Activated CD8-positive, alpha-beta T cell treated with anti-CD3 and anti-CD28 coated beads for 36 hours (primary cell): ENCODE measurements at regions of chr19 and their contacts with region 1.

Region 1: GRCh38 chr19:8580710-8581281 is 3.6 kb upstream of the MYO1F start:
- DNase-seq: peak; percentile 91
- ATAC-seq: peak; percentile 69
- H3K4me3 Mint-ChIP-seq: no peak overlapping the region
- H3K27ac Mint-ChIP-seq: no peak overlapping the region
- H3K4me1 Mint-ChIP-seq: peaks cover 20% of the 10 kb centered on the region
- H3K27me3 Mint-ChIP-seq: peaks cover 2% of the 10 kb centered on the region
- CTCF ChIP-seq: peak; percentile 100

Region 2: DNA sequence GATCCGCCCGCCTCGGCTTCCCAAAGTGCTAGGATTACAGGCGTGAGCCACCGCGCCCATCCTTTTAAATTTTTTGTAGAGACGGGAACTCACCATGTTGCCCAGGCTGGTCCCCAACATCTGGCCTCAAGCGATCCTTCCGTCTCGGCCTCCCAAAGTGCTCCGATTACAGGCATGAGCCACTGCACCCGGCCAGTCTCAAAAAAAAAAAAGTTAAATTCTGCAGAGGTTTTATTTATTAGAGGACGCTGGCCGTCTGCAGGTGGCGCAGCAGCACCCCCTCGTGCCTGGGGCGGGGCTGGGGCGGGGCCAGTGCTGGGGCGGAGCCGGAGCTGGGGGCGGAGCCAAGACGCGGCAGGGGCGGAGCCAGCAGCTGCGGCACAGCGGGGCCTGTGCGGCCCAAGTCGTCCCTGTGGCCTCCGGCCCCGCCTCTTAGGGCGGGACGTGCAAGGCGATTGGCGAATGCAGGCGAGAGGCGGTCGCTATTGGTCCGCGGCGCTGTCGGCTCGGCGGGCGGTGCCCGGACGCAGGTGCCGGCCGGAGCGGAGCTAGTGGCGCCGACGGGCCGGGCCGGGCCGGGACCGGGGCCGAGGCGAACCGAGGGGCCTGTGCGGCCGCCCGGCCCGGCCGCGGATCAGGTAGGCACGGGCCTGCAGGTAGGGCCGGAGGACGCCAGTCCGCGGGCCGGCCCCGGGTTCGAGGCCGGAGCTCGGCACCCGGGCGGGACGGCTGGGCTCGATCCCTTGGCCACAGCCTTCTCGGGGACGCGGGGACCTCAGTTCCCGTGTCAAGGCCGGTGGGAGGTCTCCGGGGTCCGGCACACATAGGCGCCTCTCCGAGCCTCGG is 167.8 kb before region 1 on chr19 and contains the start of gene MARCHF2:
- CTCF ChIA-PET with region 1: interaction called, 43 read pairs
- POLR2A ChIA-PET with region 1: no interaction called
- intact Hi-C with region 1: no loop called
- DNase-seq: peak; percentile 96
- ATAC-seq: peak; percentile 100
- H3K4me3 Mint-ChIP-seq: peak within 1 kb of the TSS; percentile 60
- H3K27ac Mint-ChIP-seq: no peak within 1 kb of the TSS
- H3K4me1 Mint-ChIP-seq: peaks cover 7% of the 10 kb centered on the region
- H3K27me3 Mint-ChIP-seq: no peaks in the 10 kb centered on the region
- CTCF ChIP-seq: peak; percentile 59
- total RNA-seq, gene MARCHF2: 8.0 to 8.6 TPM

Region 3: DNA sequence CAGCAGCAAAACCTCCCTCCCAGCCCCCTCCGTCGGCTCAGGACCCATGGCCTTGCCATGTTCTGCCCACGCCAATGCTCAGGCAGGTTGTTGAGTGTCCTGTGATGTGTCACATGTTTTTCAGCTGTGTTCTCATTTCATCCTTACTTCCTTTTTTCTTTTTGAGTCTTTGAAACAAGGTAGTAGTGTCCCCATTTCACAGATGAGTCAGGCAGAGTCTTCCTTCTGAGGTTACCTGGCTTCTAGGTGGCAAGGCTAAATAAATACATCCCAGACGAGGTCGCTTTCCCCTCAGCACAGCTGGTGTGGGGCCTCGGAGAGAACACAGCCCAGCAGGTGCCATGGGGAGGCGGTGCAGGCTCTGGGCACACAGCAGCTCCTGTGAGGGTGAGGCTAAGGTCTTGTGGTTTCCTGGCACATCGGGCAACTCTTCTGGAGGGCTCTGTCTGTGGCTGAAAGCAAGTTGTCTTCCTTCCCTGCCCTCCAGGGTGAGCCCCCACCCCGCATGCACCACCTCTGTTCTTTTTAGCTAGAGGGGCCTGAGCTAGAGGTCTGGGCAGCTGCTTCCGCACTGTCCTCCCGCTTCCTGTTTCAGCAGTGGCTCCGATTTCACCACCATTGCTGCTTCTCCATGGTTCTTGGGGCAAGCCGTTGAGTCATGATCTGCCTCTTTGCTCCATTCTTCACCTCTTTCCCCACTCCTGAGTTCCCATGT is 93.5 kb before region 1 on chr19:
- CTCF ChIA-PET with region 1: interaction called, 39 read pairs
- POLR2A ChIA-PET with region 1: interaction called, 5 read pairs
- intact Hi-C with region 1: no loop called
- DNase-seq: peak; percentile 81
- ATAC-seq: peak; percentile 83
- H3K4me3 Mint-ChIP-seq: peak overlapping the region; percentile 12
- H3K27ac Mint-ChIP-seq: peak overlapping the region; percentile 93
- H3K4me1 Mint-ChIP-seq: peaks cover 40% of the 10 kb centered on the region
- H3K27me3 Mint-ChIP-seq: no peaks in the 10 kb centered on the region
- CTCF ChIP-seq: no peak

Region 4: DNA sequence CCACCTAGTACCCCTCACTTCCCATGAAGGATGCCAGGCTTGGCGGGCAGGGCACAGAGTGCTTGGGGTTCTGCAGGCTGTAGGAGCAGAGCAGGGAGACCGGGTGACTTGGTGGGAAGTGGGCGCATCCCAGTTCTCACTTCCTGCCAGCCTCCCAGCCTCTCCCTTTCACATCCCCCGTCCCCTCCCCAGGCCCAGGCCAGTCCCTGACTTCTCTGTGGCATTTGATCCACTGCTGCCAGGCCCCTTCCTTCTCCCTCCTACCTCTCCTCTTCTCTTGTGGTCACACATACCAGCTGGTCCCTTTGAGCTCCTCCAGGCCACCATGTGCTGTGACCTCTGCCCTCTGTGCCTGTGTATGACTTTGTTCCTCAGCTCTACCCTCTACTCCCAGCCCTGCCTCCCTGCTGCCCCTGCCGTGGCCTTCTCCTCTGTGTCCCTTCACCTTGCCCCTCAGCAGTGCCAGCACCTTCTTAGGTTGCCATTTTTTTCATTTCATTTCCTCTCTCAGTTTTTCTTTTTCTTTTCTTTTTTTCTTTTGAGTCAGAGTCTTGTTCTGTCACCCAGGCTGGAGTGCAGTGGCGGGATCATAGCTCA is 23.1 kb before region 1 on chr19:
- CTCF ChIA-PET with region 1: interaction called, 60 read pairs
- POLR2A ChIA-PET with region 1: interaction called, 3 read pairs
- intact Hi-C with region 1: no loop called
- DNase-seq: no peak
- ATAC-seq: no peak
- H3K4me3 Mint-ChIP-seq: no peak overlapping the region
- H3K27ac Mint-ChIP-seq: peak overlapping the region; percentile 82
- H3K4me1 Mint-ChIP-seq: peaks cover 17% of the 10 kb centered on the region
- H3K27me3 Mint-ChIP-seq: no peaks in the 10 kb centered on the region
- CTCF ChIP-seq: no peak

Region 5: DNA sequence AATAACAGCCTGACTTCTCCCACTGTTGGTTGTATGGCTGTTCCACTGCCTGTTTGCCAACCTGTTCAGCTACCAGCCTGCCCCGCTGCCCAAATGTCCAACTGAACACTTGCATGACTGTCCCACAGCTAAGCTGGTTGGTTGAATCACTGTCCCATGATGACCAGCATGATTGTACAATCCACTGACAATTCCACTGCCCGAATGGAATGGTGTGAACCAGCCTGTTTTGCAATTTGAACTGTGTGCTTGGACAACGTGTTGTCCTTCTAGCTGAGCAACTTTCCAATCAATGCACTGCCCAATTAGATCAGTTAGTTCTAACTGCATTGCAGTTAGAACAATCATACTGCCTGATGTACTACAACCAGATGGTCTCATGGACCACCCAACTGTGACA is 21.0 kb after region 1 on chr19:
- CTCF ChIA-PET with region 1: interaction called, 97 read pairs
- POLR2A ChIA-PET with region 1: no interaction called
- intact Hi-C with region 1: no loop called
- DNase-seq: no peak
- ATAC-seq: no peak
- H3K4me3 Mint-ChIP-seq: no peak overlapping the region
- H3K27ac Mint-ChIP-seq: no peak overlapping the region
- H3K4me1 Mint-ChIP-seq: no peaks in the 10 kb centered on the region
- H3K27me3 Mint-ChIP-seq: no peaks in the 10 kb centered on the region
- CTCF ChIP-seq: no peak

Region 6: DNA sequence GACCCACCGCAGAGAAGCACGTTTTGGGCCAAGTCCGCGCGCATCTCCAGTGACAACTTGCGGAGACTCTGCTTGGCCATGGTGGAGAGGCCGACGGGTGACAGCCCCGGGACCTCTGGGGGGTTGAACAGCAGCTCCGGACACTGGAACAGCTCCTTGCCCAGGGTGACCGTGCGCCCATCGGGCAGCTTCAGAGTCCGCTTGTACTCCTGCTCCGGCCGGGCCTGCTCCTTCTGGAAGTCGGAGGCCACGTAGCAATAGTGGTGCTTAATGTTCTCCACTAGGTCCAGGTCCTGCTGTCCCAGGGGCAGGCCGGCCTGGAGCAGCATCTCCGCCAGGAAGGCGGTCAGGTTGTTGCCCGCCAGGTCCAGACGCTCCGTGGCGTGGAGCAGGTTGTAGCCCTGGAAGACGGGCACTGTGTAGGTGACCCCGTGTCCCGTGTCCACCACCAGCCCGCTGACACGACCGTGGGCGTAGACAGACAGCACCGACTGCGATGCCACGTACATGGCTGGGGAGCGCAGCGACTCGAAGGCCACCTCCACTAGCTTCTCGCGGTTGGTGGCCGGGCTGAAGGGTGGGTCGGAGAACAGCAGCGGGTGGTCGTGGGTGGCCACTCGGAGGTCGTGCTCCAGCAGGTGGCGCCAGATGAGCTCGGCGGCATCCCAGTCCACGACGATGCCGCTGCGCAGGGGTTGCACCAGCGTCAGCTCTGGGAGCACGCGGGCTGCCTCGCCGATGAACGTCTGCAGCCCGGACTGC is 117.1 kb after region 1 on chr19:
- CTCF ChIA-PET with region 1: interaction called, 13 read pairs
- POLR2A ChIA-PET with region 1: no interaction called
- intact Hi-C with region 1: no loop called
- DNase-seq: peak; percentile 41
- ATAC-seq: no peak
- H3K4me3 Mint-ChIP-seq: no peak overlapping the region
- H3K27ac Mint-ChIP-seq: no peak overlapping the region
- H3K4me1 Mint-ChIP-seq: peaks cover 23% of the 10 kb centered on the region
- H3K27me3 Mint-ChIP-seq: peaks cover 8% of the 10 kb centered on the region
- CTCF ChIP-seq: peak; percentile 66